Esophagus squamous epithelium (tissue), 5 donors: ENCODE measurements at regions of chr16 and their contacts with region 1.

Region 1: DNA sequence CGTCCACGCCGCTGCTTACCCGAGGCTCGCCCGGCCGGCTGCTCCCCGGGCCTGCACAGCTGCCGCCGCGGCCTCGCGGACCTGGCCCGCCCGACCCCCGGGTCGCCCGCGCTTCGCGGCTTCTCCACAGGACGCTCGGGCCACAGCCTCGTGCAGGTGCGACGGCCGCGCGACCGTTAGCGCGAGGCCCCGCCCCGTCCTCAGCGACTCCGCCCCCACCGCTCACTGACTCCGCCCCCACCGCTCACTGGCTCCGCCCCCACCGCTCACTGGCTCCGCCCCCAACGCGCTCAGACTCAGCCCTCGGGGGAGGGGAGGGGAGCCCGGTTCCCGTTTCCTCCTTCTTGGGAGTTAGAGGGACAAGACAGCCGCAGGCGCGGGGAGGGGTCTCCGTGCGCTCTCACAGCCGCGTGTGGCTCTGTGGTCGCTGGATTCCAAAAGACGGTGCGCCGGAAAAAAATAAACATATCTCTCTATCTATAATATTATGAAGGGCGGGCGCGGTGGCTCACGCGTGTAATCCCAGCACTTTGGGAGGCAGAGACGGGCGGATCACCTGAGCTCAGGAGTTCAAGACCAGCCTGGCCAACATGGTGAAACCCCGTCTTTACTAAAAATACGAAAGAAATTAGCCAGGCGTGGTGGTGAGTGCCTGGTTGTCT is at the start of gene MEIOB:
- DNase-seq: no peak
- H3K4me3 ChIP-seq: peak within 1 kb of the TSS in 2 of 4 donors; percentile 5 to 40
- H3K27ac ChIP-seq: no peak within 1 kb of the TSS
- H3K4me1 ChIP-seq: peaks cover 0 to 18% (median 3%) of the 10 kb centered on the region in 3 donors
- H3K27me3 ChIP-seq: peaks cover 0 to 51% (median 3%) of the 10 kb centered on the region in 4 donors
- CTCF ChIP-seq: no peak
- POLR2A ChIP-seq: no peak
- total RNA-seq, gene MEIOB: 0.76 TPM in 1 of 4 donors, not detected in the others

Region 2: DNA sequence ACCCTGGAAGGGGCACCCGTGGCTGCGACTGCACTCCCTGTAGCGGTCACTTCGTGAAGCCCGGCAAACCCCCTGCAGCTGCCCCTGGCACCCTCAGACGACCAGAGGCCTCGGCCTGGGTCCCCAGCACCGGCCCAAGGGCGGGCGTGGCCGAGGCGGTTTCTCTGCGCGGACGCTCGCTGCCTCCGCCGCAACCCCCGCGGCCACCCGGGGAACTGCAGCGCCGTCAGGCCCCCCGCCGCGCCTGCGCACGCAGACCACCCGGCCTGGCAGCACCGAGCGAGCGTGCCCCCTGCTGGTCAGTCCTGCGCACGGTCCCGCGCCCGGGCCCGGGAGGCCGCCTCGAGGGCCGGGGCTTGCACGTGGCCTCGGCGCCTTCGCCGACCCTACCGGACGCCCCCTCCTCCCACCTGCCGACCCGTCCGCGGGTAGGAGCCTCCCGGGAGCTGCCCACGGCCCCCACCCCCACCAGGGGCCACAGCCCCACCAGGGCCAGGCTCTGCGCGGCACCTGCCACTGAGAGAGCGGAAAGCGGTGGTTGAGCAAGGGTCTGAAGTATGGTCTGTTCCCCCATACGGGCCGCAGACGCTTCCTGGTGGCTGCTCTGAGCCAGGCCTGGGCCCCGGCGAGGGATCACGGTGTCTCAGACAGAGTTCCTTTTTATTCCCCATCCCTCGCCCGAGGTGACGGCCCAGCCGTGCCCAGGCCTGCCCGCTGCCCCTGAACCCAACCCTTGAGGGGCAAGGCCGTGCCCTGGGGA is 57.7 kb after region 1 on chr16:
- intact Hi-C with region 1: loop called (anchors 5 kb)
- DNase-seq: peak; percentile 35
- H3K4me3 ChIP-seq: peak overlapping the region; percentile 47 to 79 (median 63)
- H3K27ac ChIP-seq: peak overlapping the region; percentile 86 to 94 (median 87)
- H3K4me1 ChIP-seq: peaks cover 11 to 32% (median 12%) of the 10 kb centered on the region in 3 donors
- H3K27me3 ChIP-seq: peaks cover 0 to 19% (median 0%) of the 10 kb centered on the region in 4 donors
- CTCF ChIP-seq: peak; percentile 98 to 100 (median 100)
- POLR2A ChIP-seq: peak in 1 of 4 donors; percentile 8

Region 3: GRCh38 chr16:2023098-2023925 is 151.2 kb after region 1 on chr16:
- intact Hi-C with region 1: no loop called
- DNase-seq: peak; percentile 39
- H3K4me3 ChIP-seq: peak overlapping the region in 3 of 4 donors; percentile 31 to 61 (median 32)
- H3K27ac ChIP-seq: peak overlapping the region; percentile 29 to 85 (median 78)
- H3K4me1 ChIP-seq: peaks cover 36 to 73% (median 47%) of the 10 kb centered on the region in 3 donors
- H3K27me3 ChIP-seq: peaks cover 3 to 51% (median 11%) of the 10 kb centered on the region in 4 donors
- CTCF ChIP-seq: peak; percentile 96 to 100 (median 99)
- POLR2A ChIP-seq: peak in 1 of 4 donors; percentile 28